ENCODE measurements at regions of chr2 and their contacts with region 1.

Region 1: GRCh38 chr2:33583194-33583938 is 15.7 kb downstream of the FAM98A start:
- DNase-seq: no peak
- ATAC-seq: peak; percentile 36; the same call in 1 of the 2 replicates
- H3K4me3 ChIP-seq: no peak overlapping the region
- H3K27ac ChIP-seq: no peak overlapping the region
- H3K4me1 ChIP-seq: no peaks in the 10 kb centered on the region
- H3K27me3 ChIP-seq: no peaks in the 10 kb centered on the region
- CTCF ChIP-seq: peak; percentile 71 to 79 (median 72); a peak in 5 of 6 replicates
- POLR2A ChIP-seq: no peak
- RAD21 ChIP-seq: peak; percentile 80

Region 2: GRCh38 chr2:32946314-32947075 is 636.9 kb before region 1 on chr2 and contains the start of gene LTBP1:
- CTCF ChIA-PET with region 1: no interaction called
- POLR2A ChIA-PET with region 1: no interaction called
- RAD21 ChIA-PET with region 1: no interaction called
- intact Hi-C with region 1: loop called (anchors 10 kb)
- DNase-seq: peak; percentile 45
- ATAC-seq: peak; percentile 86
- H3K4me3 ChIP-seq: peak within 1 kb of the TSS; percentile 47 to 63
- H3K27ac ChIP-seq: peak within 1 kb of the TSS; percentile 44; the same call in 1 of the 2 replicates
- H3K4me1 ChIP-seq: peaks cover 0 to 16% of the 10 kb centered on the region in 2 experiments; a peak in 2 of 4 replicates
- H3K27me3 ChIP-seq: no peaks in the 10 kb centered on the region
- CTCF ChIP-seq: peak; percentile 68 to 88 (median 87)
- POLR2A ChIP-seq: no peak
- RAD21 ChIP-seq: peak; percentile 73
- total RNA-seq, gene LTBP1: 5.1 TPM

Region 3: DNA sequence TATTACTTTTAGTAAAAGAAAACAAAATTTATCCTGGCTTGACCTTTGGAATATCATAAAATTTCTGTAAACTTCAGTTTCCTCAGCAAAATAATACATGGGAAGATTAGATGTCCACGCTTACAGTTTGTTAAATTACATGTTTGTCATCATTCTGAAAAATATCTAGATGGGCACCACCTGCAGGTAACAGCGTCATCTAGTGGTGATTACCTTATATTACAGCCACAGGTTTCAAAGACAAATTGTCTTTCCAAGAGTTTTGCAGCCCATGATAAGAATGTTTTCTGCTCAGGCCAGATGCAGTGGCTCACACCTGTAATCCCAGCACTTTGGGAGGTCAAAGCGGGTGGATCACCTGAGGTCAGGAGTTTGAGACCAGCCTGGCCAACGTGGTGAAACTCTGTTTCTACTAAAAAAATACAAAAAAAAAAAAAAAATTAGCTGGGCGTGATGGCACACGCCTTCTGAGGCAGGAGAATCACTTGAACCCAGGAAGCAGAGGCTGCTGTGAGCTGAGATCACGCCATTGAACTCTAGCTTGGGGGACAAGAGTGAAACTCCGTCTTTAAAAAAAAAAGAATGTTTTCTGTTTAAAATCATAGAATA is 203.3 kb before region 1 on chr2:
- CTCF ChIA-PET with region 1: interaction called, 24 read pairs
- POLR2A ChIA-PET with region 1: no interaction called
- RAD21 ChIA-PET with region 1: no interaction called
- intact Hi-C with region 1: loop called (anchors 10 kb)
- DNase-seq: peak; percentile 18
- ATAC-seq: no peak
- H3K4me3 ChIP-seq: no peak overlapping the region
- H3K27ac ChIP-seq: no peak overlapping the region
- H3K4me1 ChIP-seq: no peaks in the 10 kb centered on the region
- H3K27me3 ChIP-seq: no peaks in the 10 kb centered on the region
- CTCF ChIP-seq: peak; percentile 54 to 90 (median 75); a peak in 5 of 6 replicates
- POLR2A ChIP-seq: no peak
- RAD21 ChIP-seq: peak; percentile 82

Region 4: GRCh38 chr2:33412920-33413319 is 170.4 kb before region 1 on chr2:
- CTCF ChIA-PET with region 1: interaction called, 25 read pairs
- POLR2A ChIA-PET with region 1: no interaction called
- RAD21 ChIA-PET with region 1: interaction called in 1 of 2 experiments, 5 read pairs
- intact Hi-C with region 1: loop called (anchors 2 kb)
- DNase-seq: peak; percentile 18
- ATAC-seq: peak; percentile 69
- H3K4me3 ChIP-seq: no peak overlapping the region
- H3K27ac ChIP-seq: no peak overlapping the region
- H3K4me1 ChIP-seq: no peaks in the 10 kb centered on the region
- H3K27me3 ChIP-seq: no peaks in the 10 kb centered on the region
- CTCF ChIP-seq: peak; percentile 33 to 49 (median 46); a peak in 4 of 6 replicates
- POLR2A ChIP-seq: no peak
- RAD21 ChIP-seq: peak; percentile 70

Region 5: GRCh38 chr2:33441235-33441810 is 142.0 kb before region 1 on chr2:
- CTCF ChIA-PET with region 1: interaction called, 23 read pairs
- POLR2A ChIA-PET with region 1: no interaction called
- RAD21 ChIA-PET with region 1: no interaction called
- intact Hi-C with region 1: no loop called
- DNase-seq: peak; percentile 34
- ATAC-seq: peak; percentile 98
- H3K4me3 ChIP-seq: no peak overlapping the region
- H3K27ac ChIP-seq: no peak overlapping the region
- H3K4me1 ChIP-seq: no peaks in the 10 kb centered on the region
- H3K27me3 ChIP-seq: no peaks in the 10 kb centered on the region
- CTCF ChIP-seq: peak; percentile 49 to 72 (median 62); a peak in 5 of 6 replicates
- POLR2A ChIP-seq: no peak
- RAD21 ChIP-seq: peak; percentile 75

Region 6: GRCh38 chr2:33475224-33476130 is 107.9 kb before region 1 on chr2:
- CTCF ChIA-PET with region 1: interaction called, 9 read pairs
- POLR2A ChIA-PET with region 1: no interaction called
- RAD21 ChIA-PET with region 1: no interaction called
- intact Hi-C with region 1: loop called (anchors 10 kb)
- DNase-seq: peak; percentile 78
- ATAC-seq: peak; percentile 86
- H3K4me3 ChIP-seq: peak overlapping the region; percentile 56 to 74
- H3K27ac ChIP-seq: peak overlapping the region; percentile 55
- H3K4me1 ChIP-seq: peaks cover 0 to 19% of the 10 kb centered on the region in 2 experiments; a peak in 3 of 4 replicates
- H3K27me3 ChIP-seq: no peaks in the 10 kb centered on the region
- CTCF ChIP-seq: peak; percentile 38 to 86 (median 78); a peak in 5 of 6 replicates
- POLR2A ChIP-seq: no peak
- RAD21 ChIP-seq: peak; percentile 63

Region 7: GRCh38 chr2:33835911-33836310 is 252.5 kb after region 1 on chr2:
- CTCF ChIA-PET with region 1: no interaction called
- POLR2A ChIA-PET with region 1: no interaction called
- RAD21 ChIA-PET with region 1: no interaction called
- intact Hi-C with region 1: no loop called
- DNase-seq: no peak
- ATAC-seq: no peak
- H3K4me3 ChIP-seq: no peak overlapping the region
- H3K27ac ChIP-seq: no peak overlapping the region
- H3K4me1 ChIP-seq: no peaks in the 10 kb centered on the region
- H3K27me3 ChIP-seq: no peaks in the 10 kb centered on the region
- CTCF ChIP-seq: no peak
- POLR2A ChIP-seq: no peak
- RAD21 ChIP-seq: no peak